Heart right ventricle (tissue), 16 donors: ENCODE measurements at regions of chr12 and their contacts with region 1.

Region 1: DNA sequence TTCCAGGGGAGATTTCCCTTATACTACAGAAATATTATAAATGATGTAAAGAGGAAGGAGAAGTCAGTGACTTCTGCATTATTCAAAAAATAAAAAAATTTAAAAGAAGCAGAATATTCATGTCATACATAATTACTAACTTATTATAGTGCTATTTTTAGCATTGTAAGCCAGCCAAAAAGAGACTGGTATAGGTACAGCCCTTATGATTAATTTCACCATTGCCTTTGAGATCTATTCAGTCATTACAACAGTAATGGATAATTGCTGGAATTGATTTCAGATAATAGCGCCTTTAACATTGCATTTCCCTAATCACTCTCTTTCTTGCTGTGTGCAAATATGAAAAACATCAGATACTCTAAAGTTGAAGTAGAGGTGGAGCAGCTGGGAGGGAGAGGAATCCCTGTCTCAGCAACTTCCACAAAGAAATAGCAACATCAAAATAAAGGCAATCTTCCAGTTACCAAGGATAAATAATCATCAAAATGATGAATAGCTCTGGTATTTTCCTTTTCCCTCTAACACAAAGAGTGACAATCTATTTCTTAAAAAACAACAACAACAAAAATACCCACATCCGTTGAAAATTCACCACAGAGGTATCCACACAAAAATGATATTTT is 71.8 kb upstream of the OVCH1 start:
- DNase-seq: no peak
- ATAC-seq: peak in 3 of 8 donors; percentile 34 to 58 (median 57)
- H3K4me3 ChIP-seq: no peak overlapping the region
- H3K27ac ChIP-seq: peak overlapping the region in 9 of 10 donors; percentile 19 to 69 (median 47)
- H3K4me1 ChIP-seq: peaks cover 0 to 48% (median 33%) of the 10 kb centered on the region in 9 donors
- H3K27me3 ChIP-seq: no peaks in the 10 kb centered on the region
- CTCF ChIP-seq: no peak

Region 2: GRCh38 chr12:29499235-29499634 is 70.0 kb before region 1 on chr12:
- intact Hi-C with region 1: no loop called
- DNase-seq: no peak
- ATAC-seq: no peak
- H3K4me3 ChIP-seq: no peak overlapping the region
- H3K27ac ChIP-seq: no peak overlapping the region
- H3K4me1 ChIP-seq: no peaks in the 10 kb centered on the region
- H3K27me3 ChIP-seq: no peaks in the 10 kb centered on the region
- CTCF ChIP-seq: no peak

Region 3: DNA sequence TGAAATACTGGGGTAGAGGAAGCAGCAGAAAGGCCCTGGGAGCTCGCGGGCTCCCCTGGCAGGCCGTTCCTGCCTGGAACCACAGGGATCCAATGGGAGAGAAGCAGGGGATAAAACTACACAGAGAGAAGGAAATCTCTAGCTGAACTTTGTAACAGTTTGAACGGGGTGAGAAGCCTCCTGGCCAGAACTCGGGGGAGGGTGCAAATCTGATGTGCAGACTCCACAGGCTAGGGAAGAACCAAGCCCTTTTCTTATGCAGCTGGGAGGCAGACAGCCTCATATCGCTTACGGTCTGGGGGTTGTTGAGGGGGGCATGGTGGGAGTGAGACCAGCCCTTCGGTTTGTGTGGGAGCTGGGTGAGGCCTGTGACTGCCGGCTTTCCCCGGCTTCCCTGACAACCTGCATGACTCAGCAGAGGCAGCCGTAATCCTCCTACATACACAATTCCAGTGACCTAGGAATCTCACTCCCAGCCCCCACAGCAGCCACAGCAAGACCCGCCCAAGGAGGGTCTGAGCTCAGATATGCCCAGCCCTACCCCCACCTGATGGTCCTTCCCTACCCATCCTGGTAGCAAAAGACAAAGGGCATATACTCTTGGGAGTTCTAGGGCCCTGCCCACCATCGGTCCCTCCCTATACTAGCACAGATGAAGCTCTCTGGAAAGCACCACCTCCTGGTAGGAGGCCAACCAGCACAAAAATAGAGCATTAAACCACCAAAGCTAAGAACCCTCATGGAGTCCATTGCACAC is 71.5 kb after region 1 on chr12:
- intact Hi-C with region 1: loop called in 1 of 10 experiments (anchors 5 kb)
- DNase-seq: peak; percentile 40 to 66
- ATAC-seq: peak; percentile 58 to 90 (median 72)
- H3K4me3 ChIP-seq: peak overlapping the region in 3 of 10 donors; percentile 5 to 20 (median 12)
- H3K27ac ChIP-seq: peak overlapping the region in 9 of 10 donors; percentile 46 to 84 (median 70)
- H3K4me1 ChIP-seq: peaks cover 0 to 27% (median 20%) of the 10 kb centered on the region in 9 donors
- H3K27me3 ChIP-seq: no peaks in the 10 kb centered on the region
- CTCF ChIP-seq: peak in 3 of 9 donors; percentile 11 to 47 (median 26)